ENCODE measurements at regions of chr1 and their contacts with region 1.

Region 1: GRCh38 chr1:26233903-26234643 is at the start of gene CEP85:
- DNase-seq: peak; percentile 100
- CTCF ChIP-seq: peak; percentile 97

Region 2: DNA sequence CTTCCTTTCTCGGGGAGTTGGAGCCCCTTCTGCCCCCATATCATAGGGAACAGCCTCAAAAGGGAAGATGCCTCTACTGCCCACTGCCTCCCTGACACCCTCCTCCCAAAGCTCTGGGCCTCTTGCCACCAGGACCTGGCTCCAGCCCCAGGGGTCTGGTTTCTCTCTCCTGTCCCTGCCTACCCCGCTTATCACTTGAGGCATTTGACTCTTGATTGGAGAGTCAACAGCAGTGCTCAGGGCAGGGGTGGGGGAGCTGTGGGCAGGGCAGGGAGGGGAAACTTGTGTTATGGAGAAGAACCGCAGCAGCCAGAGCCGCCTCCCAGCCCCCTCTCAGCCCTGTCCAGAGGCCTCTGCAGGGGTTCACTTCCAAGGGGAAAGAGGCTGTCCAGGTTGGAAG is 167.2 kb before region 1 on chr1:
- CTCF ChIA-PET with region 1: no interaction called
- POLR2A ChIA-PET with region 1: no interaction called
- DNase-seq: no peak
- CTCF ChIP-seq: no peak

Region 3: GRCh38 chr1:26169669-26170471 is 64.2 kb before region 1 on chr1 and contains the start of gene ZNF593:
- CTCF ChIA-PET with region 1: interaction called, 40 read pairs
- POLR2A ChIA-PET with region 1: no interaction called
- DNase-seq: peak; percentile 100
- CTCF ChIP-seq: peak; percentile 95

Region 4: GRCh38 chr1:26210147-26210870 is 23.8 kb before region 1 on chr1:
- CTCF ChIA-PET with region 1: interaction called, 22 read pairs
- POLR2A ChIA-PET with region 1: no interaction called
- DNase-seq: no peak
- CTCF ChIP-seq: no peak

Region 5: DNA sequence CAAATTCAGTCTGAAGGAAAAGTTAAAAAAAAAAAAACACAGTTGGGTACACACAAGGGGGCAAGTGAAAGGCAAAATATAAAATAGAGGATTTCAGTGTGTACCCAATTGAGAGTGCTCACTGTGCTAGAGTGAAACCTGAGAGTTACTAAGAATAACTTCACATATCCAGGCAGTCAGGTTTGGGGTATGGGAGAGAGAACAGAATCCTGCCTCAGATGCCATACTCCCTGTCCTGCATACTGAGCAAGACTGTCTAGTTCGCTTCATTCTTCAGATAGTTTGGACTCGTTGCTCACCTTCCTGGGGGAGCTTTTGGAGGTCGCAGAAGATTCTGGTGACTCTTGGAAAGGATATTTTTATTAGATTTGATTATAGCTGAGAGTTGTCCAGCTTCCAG is 20.3 kb after region 1 on chr1:
- CTCF ChIA-PET with region 1: interaction called, 19 read pairs
- POLR2A ChIA-PET with region 1: no interaction called
- DNase-seq: no peak
- CTCF ChIP-seq: no peak

Region 6: DNA sequence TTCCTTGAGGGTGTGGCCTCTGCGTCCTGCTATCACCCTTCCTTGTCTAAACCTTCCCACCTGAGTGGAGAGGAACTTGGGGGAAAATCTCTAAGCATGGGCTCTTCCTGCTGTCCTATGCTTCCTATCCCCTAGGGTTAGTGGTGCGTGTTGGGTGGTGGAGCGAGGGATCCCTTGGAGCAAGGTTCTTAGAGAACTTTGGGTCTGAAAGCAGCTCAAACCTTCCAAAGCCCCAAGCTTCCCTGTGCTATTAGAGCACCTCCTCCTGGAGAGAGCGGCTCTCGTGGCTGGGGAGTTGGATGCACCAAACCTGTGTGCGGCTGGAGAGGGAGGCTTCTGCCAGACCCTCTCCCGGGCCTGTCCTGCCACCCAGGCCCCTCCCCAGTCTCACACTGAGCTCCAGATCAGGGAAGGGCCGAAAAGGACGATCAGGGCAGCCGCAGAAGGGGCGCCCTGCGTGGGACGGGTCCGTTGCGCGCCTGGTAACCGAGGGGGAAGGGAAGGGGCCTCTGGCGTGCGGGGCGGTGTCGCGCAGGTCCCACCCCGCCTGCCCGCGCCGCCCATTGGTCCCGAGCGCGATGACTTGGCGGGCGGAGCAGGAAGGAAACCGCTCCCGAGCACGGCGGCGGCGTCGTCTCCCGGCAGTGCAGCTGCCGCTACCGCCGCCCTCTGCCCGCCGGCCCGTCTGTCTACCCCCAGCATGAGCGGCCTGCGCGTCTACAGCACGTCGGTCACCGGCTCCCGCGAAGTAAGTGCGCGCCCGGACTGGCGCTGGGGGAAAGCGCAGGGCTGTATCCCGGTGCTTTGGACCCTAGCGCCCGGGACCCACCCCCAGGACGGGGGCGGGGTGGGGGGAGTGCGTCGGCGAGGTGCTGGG is 45.6 kb after region 1 on chr1 and contains the start of gene SH3BGRL3:
- CTCF ChIA-PET with region 1: interaction called, 21 read pairs
- POLR2A ChIA-PET with region 1: no interaction called
- DNase-seq: peak; percentile 95
- CTCF ChIP-seq: peak; percentile 47

Region 7: DNA sequence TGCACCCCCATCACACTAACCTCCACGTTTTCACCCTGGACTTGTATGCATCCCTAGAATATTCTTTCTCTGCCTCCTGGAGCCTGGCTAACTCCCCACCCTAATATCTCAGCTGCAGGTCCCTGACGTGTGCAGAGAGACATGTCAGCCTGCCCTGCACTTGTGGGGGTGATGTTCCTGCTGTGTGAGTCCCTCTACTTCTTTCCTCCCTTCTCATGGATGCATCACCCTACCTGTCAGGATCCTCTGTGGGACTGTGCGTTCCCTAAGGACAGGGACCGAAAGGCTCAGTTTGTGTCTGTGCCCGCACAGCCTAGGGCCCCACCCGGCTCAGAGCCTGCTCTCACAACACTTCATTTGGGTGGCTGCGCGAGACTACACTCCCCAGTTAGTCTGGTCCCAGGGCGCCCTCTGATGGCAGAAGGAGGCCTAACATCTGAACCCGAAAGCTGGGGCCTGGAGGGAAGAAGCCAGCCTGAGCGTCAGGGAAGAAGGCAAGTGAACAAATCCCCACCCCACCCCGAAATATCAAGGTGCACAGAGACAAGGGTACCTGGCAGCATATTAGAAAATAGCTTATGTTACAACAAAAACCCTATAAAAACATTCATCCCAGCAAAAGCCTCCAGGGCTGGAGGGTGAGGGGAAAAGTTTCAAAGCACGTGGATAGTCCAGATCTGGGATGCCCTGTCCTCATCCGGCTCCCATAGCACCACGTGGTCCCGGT is 87.4 kb after region 1 on chr1:
- CTCF ChIA-PET with region 1: interaction called, 22 read pairs
- POLR2A ChIA-PET with region 1: interaction called, 4 read pairs
- DNase-seq: peak; percentile 87
- CTCF ChIP-seq: peak; percentile 96

Region 8: GRCh38 chr1:26391450-26391849 is 157.4 kb after region 1 on chr1:
- CTCF ChIA-PET with region 1: no interaction called
- POLR2A ChIA-PET with region 1: no interaction called
- DNase-seq: peak; percentile 56
- CTCF ChIP-seq: peak; percentile 45

Region 9: DNA sequence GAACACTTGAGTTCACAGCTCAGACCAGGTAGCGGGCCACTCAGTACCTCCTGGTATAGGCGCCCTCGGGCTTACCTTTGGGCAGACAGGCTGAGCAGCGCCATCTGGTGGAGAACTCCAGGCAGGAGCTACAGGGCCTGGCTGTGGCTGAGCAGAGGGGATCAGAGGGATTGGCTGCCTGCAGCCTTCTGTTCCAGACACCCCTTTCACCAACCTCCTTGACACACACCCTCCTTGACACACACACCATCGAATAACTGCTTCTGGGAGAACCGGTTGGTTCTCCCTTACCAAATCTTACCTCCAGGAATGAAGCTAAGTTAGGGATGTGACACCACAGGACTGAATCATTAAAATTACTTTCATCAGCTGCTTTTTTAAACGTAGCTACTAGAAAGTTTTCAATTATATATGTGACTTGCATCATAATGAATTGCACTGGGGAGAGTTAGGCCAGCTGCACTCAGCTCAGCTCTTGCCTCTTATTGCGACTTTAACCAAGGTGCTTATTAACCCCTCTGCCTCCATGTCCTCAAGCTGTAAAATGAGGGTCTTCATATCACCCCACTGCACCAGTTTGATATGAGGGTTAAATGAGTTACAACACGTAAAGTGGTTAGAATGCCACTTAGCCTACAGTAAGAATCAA is 183.2 kb after region 1 on chr1:
- CTCF ChIA-PET with region 1: interaction called, 21 read pairs
- POLR2A ChIA-PET with region 1: no interaction called
- DNase-seq: peak; percentile 85
- CTCF ChIP-seq: peak; percentile 99

Measured in GM10248 (cell line).